PC-3 (cell line): ENCODE measurements at regions of chr19 and their contacts with region 1.

Region 1: GRCh38 chr19:12672744-12673143 is 6.1 kb downstream of the WDR83 start:
- DNase-seq: no peak
- ATAC-seq: no peak
- H3K4me3 ChIP-seq: no peak overlapping the region
- H3K27ac ChIP-seq: no peak overlapping the region
- H3K4me1 ChIP-seq: peaks cover 15% of the 10 kb centered on the region
- H3K27me3 ChIP-seq: no peaks in the 10 kb centered on the region
- CTCF ChIP-seq: no peak

Region 2: DNA sequence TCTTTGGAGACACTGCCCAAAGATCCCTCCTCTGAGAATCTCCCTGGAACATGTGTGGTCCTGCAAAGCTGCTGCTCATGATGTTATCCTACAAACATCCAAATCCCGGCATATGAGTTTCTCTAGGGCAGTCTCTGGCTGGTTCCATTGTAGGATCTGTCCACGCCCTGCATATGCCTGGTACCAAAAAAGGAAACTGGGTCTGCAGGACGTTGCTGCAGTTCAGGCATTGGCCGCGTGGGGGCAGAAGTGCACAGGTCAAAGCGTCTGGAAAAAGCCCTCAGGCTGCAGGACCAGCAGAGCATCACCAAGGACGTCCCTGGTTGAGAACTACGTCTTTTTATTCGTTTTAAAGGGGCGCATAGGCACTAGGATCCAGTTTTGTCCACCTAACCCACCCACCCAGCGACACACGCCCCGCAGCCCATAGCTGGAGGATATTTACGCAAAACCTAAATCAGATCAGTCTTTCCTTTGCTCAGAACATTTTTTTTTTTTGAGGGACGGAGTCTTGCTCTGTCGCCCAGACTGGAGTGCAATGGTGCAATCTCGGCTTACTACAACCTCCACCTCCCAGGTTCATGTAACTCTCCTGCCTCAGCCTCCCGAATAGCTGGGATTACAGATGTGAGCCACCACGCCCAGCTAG is 108.6 kb before region 1 on chr19:
- CTCF ChIA-PET with region 1: interaction called, 12 read pairs
- POLR2A ChIA-PET with region 1: no interaction called
- intact Hi-C with region 1: loop called (anchors 1 kb)
- DNase-seq: peak; percentile 96
- ATAC-seq: peak; percentile 95
- H3K4me3 ChIP-seq: peak overlapping the region; percentile 14; the same call in 1 of the 2 replicates
- H3K27ac ChIP-seq: no peak overlapping the region
- H3K4me1 ChIP-seq: 0 out of 2 replicates have a peak, but pooled peaks cover 3% of the 10 kb centered on the region
- H3K27me3 ChIP-seq: no peaks in the 10 kb centered on the region
- CTCF ChIP-seq: peak; percentile 98

Region 3: DNA sequence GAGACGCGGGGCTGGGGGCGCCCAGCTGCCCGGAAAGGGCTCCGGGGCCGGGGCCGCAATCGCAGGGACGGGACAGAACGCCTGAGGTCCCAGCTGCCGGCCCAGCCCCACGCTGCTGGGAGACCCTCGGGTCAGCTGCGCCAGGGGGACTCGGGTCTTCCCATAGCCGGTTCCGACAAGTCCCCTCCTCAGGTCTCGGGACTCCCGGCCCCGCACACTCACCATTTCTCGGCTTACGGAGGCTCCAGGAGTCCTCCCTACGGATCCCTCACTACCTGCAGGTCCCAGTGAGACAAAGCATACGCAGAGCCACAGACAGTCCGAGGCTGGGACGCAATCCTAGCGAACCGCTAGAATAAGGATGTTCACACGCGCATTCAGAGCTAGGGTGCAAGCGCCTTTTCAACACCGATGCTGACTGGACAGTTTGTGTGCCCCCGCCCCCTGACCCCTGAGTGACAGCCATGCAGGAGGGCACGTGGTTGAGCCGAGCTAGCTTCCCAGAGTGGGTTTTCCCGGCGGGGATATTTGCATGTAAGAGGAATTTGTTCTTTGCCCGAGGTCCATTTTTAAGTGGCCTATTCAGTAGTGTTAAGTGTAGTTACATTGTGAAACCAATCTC is 75.7 kb before region 1 on chr19:
- CTCF ChIA-PET with region 1: no interaction called
- POLR2A ChIA-PET with region 1: no interaction called
- intact Hi-C with region 1: no loop called
- DNase-seq: no peak
- ATAC-seq: no peak
- H3K4me3 ChIP-seq: no peak overlapping the region
- H3K27ac ChIP-seq: no peak overlapping the region
- H3K4me1 ChIP-seq: no peaks in the 10 kb centered on the region
- H3K27me3 ChIP-seq: no peaks in the 10 kb centered on the region
- CTCF ChIP-seq: no peak

Region 4: DNA sequence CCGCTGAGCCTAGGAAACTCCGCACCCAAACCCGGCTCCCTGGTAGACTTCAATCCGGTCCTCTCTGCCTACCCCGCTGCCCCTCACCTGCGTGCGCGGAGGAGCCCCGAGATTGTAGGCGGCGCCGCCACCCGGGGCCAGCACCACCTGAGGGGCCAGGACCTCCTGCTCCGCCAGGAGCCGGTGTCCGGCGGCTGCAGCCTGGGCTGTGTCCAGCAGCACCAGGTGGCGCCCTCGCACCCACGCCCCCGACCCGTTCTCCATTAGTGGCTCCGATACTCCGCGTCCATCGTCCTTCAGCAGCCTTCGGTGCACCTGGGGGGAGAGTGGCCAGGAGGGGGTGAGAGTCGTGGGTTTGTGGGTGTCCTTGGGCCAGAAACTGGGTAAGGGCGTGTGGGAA is 24.7 kb before region 1 on chr19:
- CTCF ChIA-PET with region 1: no interaction called
- POLR2A ChIA-PET with region 1: no interaction called
- intact Hi-C with region 1: no loop called
- DNase-seq: no peak
- ATAC-seq: no peak
- H3K4me3 ChIP-seq: no peak overlapping the region
- H3K27ac ChIP-seq: no peak overlapping the region
- H3K4me1 ChIP-seq: no peaks in the 10 kb centered on the region
- H3K27me3 ChIP-seq: no peaks in the 10 kb centered on the region
- CTCF ChIP-seq: peak; percentile 28; the same call in 1 of the 2 replicates